CD8-positive, alpha-beta T cell (primary cell): ENCODE measurements at regions of chr14 and their contacts with region 1.

Region 1: GRCh38 chr14:22829661-22830442 is at the start of gene MRPL52:
- DNase-seq: peak; percentile 81 to 97 (median 90)
- ATAC-seq: peak; percentile 95
- H3K4me3 ChIP-seq: peak within 1 kb of the TSS; percentile 89 to 91
- H3K4me3 Mint-ChIP-seq: peak within 1 kb of the TSS; percentile 92
- H3K27ac ChIP-seq: peak within 1 kb of the TSS; percentile 69 to 90
- H3K27ac Mint-ChIP-seq: peak within 1 kb of the TSS; percentile 96
- H3K4me1 ChIP-seq: peaks cover 13% of the 10 kb centered on the region
- H3K4me1 Mint-ChIP-seq: peaks cover 31% of the 10 kb centered on the region
- H3K27me3 ChIP-seq: peaks cover 0 to 5% of the 10 kb centered on the region in 2 experiments
- H3K27me3 Mint-ChIP-seq: peaks cover 7% of the 10 kb centered on the region
- CTCF ChIP-seq: no peak
- total RNA-seq, gene MRPL52: 22.3 to 25.7 TPM

Region 2: GRCh38 chr14:22886500-22887259 is 56.8 kb after region 1 on chr14:
- CTCF ChIA-PET with region 1: interaction called, 3 read pairs
- POLR2A ChIA-PET with region 1: interaction called, 3 read pairs
- intact Hi-C with region 1: loop called in 1 of 2 experiments (anchors 5 kb)
- DNase-seq: peak; percentile 34 to 85 (median 71)
- ATAC-seq: peak; percentile 67
- H3K4me3 ChIP-seq: peak overlapping the region; percentile 40 to 44
- H3K4me3 Mint-ChIP-seq: peak overlapping the region; percentile 81
- H3K27ac ChIP-seq: peak overlapping the region; percentile 29 to 39
- H3K27ac Mint-ChIP-seq: peak overlapping the region; percentile 74
- H3K4me1 ChIP-seq: peaks cover 45% of the 10 kb centered on the region
- H3K4me1 Mint-ChIP-seq: peaks cover 56% of the 10 kb centered on the region
- H3K27me3 ChIP-seq: peaks cover 0 to 2% of the 10 kb centered on the region in 2 experiments
- H3K27me3 Mint-ChIP-seq: no peaks in the 10 kb centered on the region
- CTCF ChIP-seq: no peak

Region 3: GRCh38 chr14:22994762-22995275 is 165.0 kb after region 1 on chr14:
- CTCF ChIA-PET with region 1: no interaction called
- POLR2A ChIA-PET with region 1: no interaction called
- intact Hi-C with region 1: no loop called
- DNase-seq: peak in 7 of 9 experiments; percentile 13 to 63 (median 46)
- ATAC-seq: peak; percentile 85
- H3K4me3 ChIP-seq: no peak overlapping the region
- H3K4me3 Mint-ChIP-seq: no peak overlapping the region
- H3K27ac ChIP-seq: no peak overlapping the region
- H3K27ac Mint-ChIP-seq: no peak overlapping the region
- H3K4me1 ChIP-seq: peaks cover 3% of the 10 kb centered on the region
- H3K4me1 Mint-ChIP-seq: peaks cover 5% of the 10 kb centered on the region
- H3K27me3 ChIP-seq: no peaks in the 10 kb centered on the region
- H3K27me3 Mint-ChIP-seq: no peaks in the 10 kb centered on the region
- CTCF ChIP-seq: peak; percentile 46

Region 4: GRCh38 chr14:23865502-23865901 is 1035.7 kb after region 1 on chr14:
- CTCF ChIA-PET with region 1: no interaction called
- POLR2A ChIA-PET with region 1: no interaction called
- intact Hi-C with region 1: no loop called
- DNase-seq: no peak
- ATAC-seq: no peak
- H3K4me3 ChIP-seq: no peak overlapping the region
- H3K4me3 Mint-ChIP-seq: no peak overlapping the region
- H3K27ac ChIP-seq: no peak overlapping the region
- H3K27ac Mint-ChIP-seq: no peak overlapping the region
- H3K4me1 ChIP-seq: no peaks in the 10 kb centered on the region
- H3K4me1 Mint-ChIP-seq: no peaks in the 10 kb centered on the region
- H3K27me3 ChIP-seq: no peaks in the 10 kb centered on the region
- H3K27me3 Mint-ChIP-seq: peaks cover 25% of the 10 kb centered on the region
- CTCF ChIP-seq: no peak